CD8-positive, alpha-beta T cell (primary cell): ENCODE measurements at regions of chr5 and their contacts with region 1.

Region 1: DNA sequence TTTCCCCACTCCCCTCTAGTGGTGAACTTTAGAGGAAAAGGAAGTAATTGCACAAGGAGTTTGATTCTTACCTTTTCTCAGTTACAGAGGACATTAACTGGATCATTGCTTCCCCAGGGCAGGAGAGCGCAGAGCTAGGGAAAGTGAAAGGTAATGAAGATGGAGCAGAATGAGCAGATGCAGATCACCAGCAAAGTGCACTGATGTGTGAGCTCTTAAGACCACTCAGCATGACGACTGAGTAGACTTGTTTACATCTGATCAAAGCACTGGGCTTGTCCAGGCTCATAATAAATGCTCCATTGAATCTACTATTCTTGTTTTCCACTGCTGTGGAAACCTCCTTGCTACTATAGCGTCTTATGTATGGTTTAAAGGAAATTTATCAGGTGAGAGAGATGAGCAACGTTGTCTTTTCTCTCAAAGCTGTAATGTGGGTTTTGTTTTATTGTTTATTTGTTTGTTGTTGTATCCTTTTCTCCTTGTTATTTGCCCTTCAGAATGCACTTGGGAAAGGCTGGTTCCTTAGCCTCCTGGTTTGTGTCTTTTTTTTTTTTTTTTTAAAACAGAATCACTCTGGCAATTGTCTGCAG is 25.3 kb downstream of the SLC22A5 start:
- DNase-seq: no peak
- ATAC-seq: no peak
- H3K4me3 ChIP-seq: no peak overlapping the region
- H3K4me3 Mint-ChIP-seq: no peak overlapping the region
- H3K27ac ChIP-seq: no peak overlapping the region
- H3K27ac Mint-ChIP-seq: no peak overlapping the region
- H3K4me1 ChIP-seq: peaks cover 41% of the 10 kb centered on the region
- H3K4me1 Mint-ChIP-seq: peaks cover 53% of the 10 kb centered on the region
- H3K27me3 ChIP-seq: no peaks in the 10 kb centered on the region
- H3K27me3 Mint-ChIP-seq: no peaks in the 10 kb centered on the region
- CTCF ChIP-seq: no peak

Region 2: GRCh38 chr5:132190161-132190817 is 204.5 kb before region 1 on chr5:
- CTCF ChIA-PET with region 1: no interaction called
- POLR2A ChIA-PET with region 1: no interaction called
- intact Hi-C with region 1: no loop called
- DNase-seq: peak in 2 of 9 experiments; percentile 61 to 73
- ATAC-seq: peak; percentile 100
- H3K4me3 ChIP-seq: no peak overlapping the region
- H3K4me3 Mint-ChIP-seq: no peak overlapping the region
- H3K27ac ChIP-seq: no peak overlapping the region
- H3K27ac Mint-ChIP-seq: no peak overlapping the region
- H3K4me1 ChIP-seq: no peaks in the 10 kb centered on the region
- H3K4me1 Mint-ChIP-seq: peaks cover 3% of the 10 kb centered on the region
- H3K27me3 ChIP-seq: no peaks in the 10 kb centered on the region
- H3K27me3 Mint-ChIP-seq: peaks cover 3% of the 10 kb centered on the region
- CTCF ChIP-seq: peak; percentile 52

Region 3: DNA sequence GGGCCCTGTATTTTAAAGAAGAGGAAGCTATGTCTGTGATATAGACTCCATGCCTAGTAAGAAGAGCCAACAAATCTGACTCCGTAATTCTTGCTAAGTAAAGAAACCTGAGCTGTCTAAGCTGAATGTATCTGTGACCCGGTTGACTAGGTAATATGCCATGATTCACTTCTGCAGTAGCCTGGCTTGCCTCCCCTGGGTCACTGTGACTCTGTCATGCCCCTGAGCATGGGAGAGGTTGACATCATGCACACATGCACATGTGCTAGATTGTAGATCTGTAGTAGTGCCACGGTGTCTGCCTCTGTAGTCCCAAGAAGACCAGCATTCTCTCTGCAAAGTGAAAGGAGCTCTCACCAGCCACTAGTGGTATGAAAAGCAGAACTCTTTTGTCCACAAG is 16.2 kb before region 1 on chr5:
- CTCF ChIA-PET with region 1: no interaction called
- POLR2A ChIA-PET with region 1: no interaction called
- intact Hi-C with region 1: no loop called
- DNase-seq: no peak
- ATAC-seq: no peak
- H3K4me3 ChIP-seq: no peak overlapping the region
- H3K4me3 Mint-ChIP-seq: no peak overlapping the region
- H3K27ac ChIP-seq: no peak overlapping the region
- H3K27ac Mint-ChIP-seq: no peak overlapping the region
- H3K4me1 ChIP-seq: no peaks in the 10 kb centered on the region
- H3K4me1 Mint-ChIP-seq: no peaks in the 10 kb centered on the region
- H3K27me3 ChIP-seq: no peaks in the 10 kb centered on the region
- H3K27me3 Mint-ChIP-seq: no peaks in the 10 kb centered on the region
- CTCF ChIP-seq: no peak

Region 4: DNA sequence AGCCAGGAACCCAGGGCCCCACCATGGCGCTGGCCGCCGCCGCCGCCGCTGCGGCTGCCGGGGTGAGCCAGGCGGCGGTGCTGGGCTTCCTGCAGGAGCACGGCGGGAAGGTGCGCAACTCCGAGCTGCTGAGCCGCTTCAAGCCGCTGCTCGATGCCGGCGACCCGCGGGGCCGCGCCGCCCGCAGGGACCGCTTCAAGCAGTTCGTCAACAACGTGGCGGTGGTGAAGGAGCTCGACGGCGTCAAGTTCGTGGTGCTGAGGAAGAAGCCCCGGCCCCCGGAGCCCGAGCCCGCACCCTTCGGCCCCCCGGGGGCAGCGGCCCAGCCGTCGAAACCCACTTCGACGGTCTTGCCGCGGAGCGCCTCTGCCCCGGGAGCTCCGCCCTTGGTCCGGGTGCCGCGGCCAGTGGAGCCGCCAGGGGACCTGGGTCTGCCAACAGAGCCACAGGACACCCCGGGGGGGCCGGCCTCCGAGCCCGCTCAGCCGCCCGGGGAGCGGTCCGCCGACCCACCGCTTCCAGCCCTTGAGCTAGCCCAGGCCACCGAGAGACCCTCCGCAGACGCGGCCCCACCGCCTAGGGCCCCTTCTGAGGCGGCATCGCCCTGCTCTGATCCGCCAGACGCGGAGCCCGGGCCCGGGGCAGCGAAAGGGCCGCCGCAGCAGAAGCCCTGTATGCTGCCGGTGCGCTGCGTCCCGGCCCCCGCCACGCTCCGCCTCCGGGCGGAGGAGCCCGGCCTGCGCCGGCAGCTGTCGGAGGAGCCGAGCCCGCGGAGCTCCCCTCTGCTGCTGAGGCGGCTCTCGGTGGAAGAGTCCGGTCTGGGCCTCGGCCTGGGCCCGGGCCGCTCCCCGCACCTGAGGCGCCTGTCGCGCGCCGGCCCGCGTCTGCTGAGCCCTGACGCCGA is 419.1 kb after region 1 on chr5:
- CTCF ChIA-PET with region 1: no interaction called
- POLR2A ChIA-PET with region 1: no interaction called
- intact Hi-C with region 1: loop called in 1 of 2 experiments (anchors 1 kb)
- DNase-seq: peak in 4 of 9 experiments; percentile 27 to 64 (median 52)
- ATAC-seq: peak; percentile 70
- H3K4me3 ChIP-seq: peak overlapping the region in 1 of 2 experiments; percentile 26
- H3K4me3 Mint-ChIP-seq: peak overlapping the region; percentile 26
- H3K27ac ChIP-seq: no peak overlapping the region
- H3K27ac Mint-ChIP-seq: no peak overlapping the region
- H3K4me1 ChIP-seq: peaks cover 7% of the 10 kb centered on the region
- H3K4me1 Mint-ChIP-seq: peaks cover 9% of the 10 kb centered on the region
- H3K27me3 ChIP-seq: peaks cover 12 to 16% of the 10 kb centered on the region in 2 experiments
- H3K27me3 Mint-ChIP-seq: peaks cover 36% of the 10 kb centered on the region
- CTCF ChIP-seq: no peak